ENCODE measurements at regions of chr16 and their contacts with region 1.

Region 1: GRCh38 chr16:67260426-67261075 is 11.8 kb downstream of the SLC9A5 start:
- DNase-seq: no peak
- ATAC-seq: peak; percentile 88
- H3K4me3 ChIP-seq: no peak overlapping the region
- H3K27ac ChIP-seq: no peak overlapping the region
- H3K4me1 ChIP-seq: no peaks in the 10 kb centered on the region
- H3K27me3 ChIP-seq: no peaks in the 10 kb centered on the region
- CTCF ChIP-seq: peak; percentile 77 to 81 (median 80)
- EP300 ChIP-seq: no peak
- POLR2A ChIP-seq: no peak
- RAD21 ChIP-seq: peak; percentile 94

Region 2: GRCh38 chr16:66954097-66954659 is 306.4 kb before region 1 on chr16:
- CTCF ChIA-PET with region 1: no interaction called
- POLR2A ChIA-PET with region 1: no interaction called
- RAD21 ChIA-PET with region 1: no interaction called
- SMC1A ChIA-PET with region 1: no interaction called
- in situ Hi-C with region 1: no loop called
- intact Hi-C with region 1: no loop called
- DNase-seq: peak; percentile 45
- ATAC-seq: peak; percentile 82
- H3K4me3 ChIP-seq: no peak overlapping the region
- H3K27ac ChIP-seq: no peak overlapping the region
- H3K4me1 ChIP-seq: peaks cover 9% of the 10 kb centered on the region
- H3K27me3 ChIP-seq: no peaks in the 10 kb centered on the region
- CTCF ChIP-seq: peak; percentile 76 to 92 (median 90)
- EP300 ChIP-seq: no peak
- POLR2A ChIP-seq: no peak
- RAD21 ChIP-seq: peak; percentile 90

Region 3: GRCh38 chr16:67216612-67217490 is 43.7 kb before region 1 on chr16:
- CTCF ChIA-PET with region 1: no interaction called
- POLR2A ChIA-PET with region 1: no interaction called
- RAD21 ChIA-PET with region 1: no interaction called
- SMC1A ChIA-PET with region 1: no interaction called
- in situ Hi-C with region 1: no loop called
- intact Hi-C with region 1: no loop called
- DNase-seq: no peak
- ATAC-seq: no peak
- H3K4me3 ChIP-seq: no peak overlapping the region
- H3K27ac ChIP-seq: no peak overlapping the region
- H3K4me1 ChIP-seq: no peaks in the 10 kb centered on the region
- H3K27me3 ChIP-seq: no peaks in the 10 kb centered on the region
- CTCF ChIP-seq: no peak
- EP300 ChIP-seq: no peak
- POLR2A ChIP-seq: no peak
- RAD21 ChIP-seq: no peak

Region 4: DNA sequence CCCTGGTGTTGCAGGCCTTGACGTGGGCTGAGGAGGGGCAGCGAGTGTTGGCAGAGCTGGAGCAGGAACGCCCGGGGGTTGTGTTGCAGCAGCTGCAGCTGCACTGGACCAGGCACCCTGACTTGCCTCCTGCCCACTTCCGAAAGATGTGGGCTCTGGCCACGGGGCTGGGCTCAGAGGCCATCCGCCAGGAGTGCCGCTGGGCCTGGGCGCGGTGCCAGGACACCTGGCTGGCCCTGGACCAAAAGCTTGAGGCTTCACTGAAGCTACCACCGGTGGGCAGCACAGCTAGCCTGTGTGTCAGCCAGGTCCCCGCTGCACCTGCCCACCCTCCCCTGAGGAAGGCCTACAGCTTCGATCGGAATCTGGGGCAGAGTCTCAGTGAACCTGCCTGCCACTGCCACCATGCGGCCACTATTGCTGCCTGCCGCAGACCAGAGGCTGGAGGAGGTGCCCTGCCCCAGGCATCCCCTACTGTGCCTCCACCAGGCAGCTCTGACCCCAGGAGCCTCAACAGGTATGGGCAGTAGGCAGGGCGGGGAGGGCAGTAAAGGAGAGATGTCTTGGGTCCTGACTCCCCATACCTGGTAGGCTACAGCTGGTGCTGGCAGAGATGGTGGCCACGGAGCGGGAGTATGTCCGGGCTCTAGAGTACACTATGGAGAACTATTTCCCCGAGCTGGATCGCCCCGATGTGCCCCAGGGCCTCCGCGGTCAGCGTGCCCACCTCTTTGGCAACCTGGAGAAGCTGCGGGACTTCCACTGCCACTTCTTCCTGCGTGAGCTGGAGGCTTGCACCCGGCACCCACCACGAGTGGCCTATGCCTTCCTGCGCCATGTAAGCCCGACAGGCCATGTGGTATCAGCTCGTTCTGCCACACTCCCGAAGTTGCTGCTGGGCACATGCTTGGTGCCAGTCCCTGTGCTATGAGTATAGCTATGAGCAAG is 24.4 kb after region 1 on chr16:
- CTCF ChIA-PET with region 1: interaction called, 11 read pairs
- POLR2A ChIA-PET with region 1: no interaction called
- RAD21 ChIA-PET with region 1: interaction called, 3 read pairs
- SMC1A ChIA-PET with region 1: interaction called, 3 read pairs
- in situ Hi-C with region 1: no loop called
- intact Hi-C with region 1: no loop called
- DNase-seq: no peak
- ATAC-seq: peak; percentile 69
- H3K4me3 ChIP-seq: no peak overlapping the region
- H3K27ac ChIP-seq: no peak overlapping the region
- H3K4me1 ChIP-seq: no peaks in the 10 kb centered on the region
- H3K27me3 ChIP-seq: no peaks in the 10 kb centered on the region
- CTCF ChIP-seq: peak; percentile 13 to 38 (median 38); a peak in 3 of 6 replicates
- EP300 ChIP-seq: no peak
- POLR2A ChIP-seq: no peak
- RAD21 ChIP-seq: peak; percentile 16; the same call in 1 of the 2 replicates

Region 5: GRCh38 chr16:67339453-67339852 is 78.9 kb after region 1 on chr16:
- CTCF ChIA-PET with region 1: interaction called, 78 read pairs
- POLR2A ChIA-PET with region 1: no interaction called
- RAD21 ChIA-PET with region 1: interaction called, 73 read pairs
- SMC1A ChIA-PET with region 1: interaction called, 39 read pairs
- in situ Hi-C with region 1: no loop called
- intact Hi-C with region 1: loop called (anchors 2 kb)
- DNase-seq: no peak
- ATAC-seq: peak; percentile 75
- H3K4me3 ChIP-seq: no peak overlapping the region
- H3K27ac ChIP-seq: no peak overlapping the region
- H3K4me1 ChIP-seq: no peaks in the 10 kb centered on the region
- H3K27me3 ChIP-seq: no peaks in the 10 kb centered on the region
- CTCF ChIP-seq: peak; percentile 23 to 51 (median 25); a peak in 4 of 6 replicates
- EP300 ChIP-seq: no peak
- POLR2A ChIP-seq: no peak
- RAD21 ChIP-seq: peak; percentile 68

Region 6: GRCh38 chr16:67399181-67399733 is 138.7 kb after region 1 on chr16:
- CTCF ChIA-PET with region 1: interaction called, 14 read pairs
- POLR2A ChIA-PET with region 1: interaction called, 3 read pairs
- RAD21 ChIA-PET with region 1: interaction called, 19 read pairs
- SMC1A ChIA-PET with region 1: interaction called, 5 read pairs
- in situ Hi-C with region 1: no loop called
- intact Hi-C with region 1: no loop called
- DNase-seq: no peak
- ATAC-seq: peak; percentile 85
- H3K4me3 ChIP-seq: no peak overlapping the region
- H3K27ac ChIP-seq: no peak overlapping the region
- H3K4me1 ChIP-seq: no peaks in the 10 kb centered on the region
- H3K27me3 ChIP-seq: peaks cover 1 to 6% of the 10 kb centered on the region in 2 experiments
- CTCF ChIP-seq: peak; percentile 67 to 80 (median 71)
- EP300 ChIP-seq: no peak
- POLR2A ChIP-seq: no peak
- RAD21 ChIP-seq: peak; percentile 74